ENCODE measurements at regions of chr14 and their contacts with region 1.

Region 1: GRCh38 chr14:51846631-51847488 is 13.6 kb upstream of the GNG2 start:
- DNase-seq: peak; percentile 67
- ATAC-seq: peak; percentile 78
- H3K4me3 Mint-ChIP-seq: peak overlapping the region; percentile 88
- H3K27ac Mint-ChIP-seq: peak overlapping the region; percentile 99
- H3K4me1 Mint-ChIP-seq: peaks cover 86% of the 10 kb centered on the region
- H3K27me3 Mint-ChIP-seq: no peaks in the 10 kb centered on the region
- CTCF ChIP-seq: no peak

Region 2: DNA sequence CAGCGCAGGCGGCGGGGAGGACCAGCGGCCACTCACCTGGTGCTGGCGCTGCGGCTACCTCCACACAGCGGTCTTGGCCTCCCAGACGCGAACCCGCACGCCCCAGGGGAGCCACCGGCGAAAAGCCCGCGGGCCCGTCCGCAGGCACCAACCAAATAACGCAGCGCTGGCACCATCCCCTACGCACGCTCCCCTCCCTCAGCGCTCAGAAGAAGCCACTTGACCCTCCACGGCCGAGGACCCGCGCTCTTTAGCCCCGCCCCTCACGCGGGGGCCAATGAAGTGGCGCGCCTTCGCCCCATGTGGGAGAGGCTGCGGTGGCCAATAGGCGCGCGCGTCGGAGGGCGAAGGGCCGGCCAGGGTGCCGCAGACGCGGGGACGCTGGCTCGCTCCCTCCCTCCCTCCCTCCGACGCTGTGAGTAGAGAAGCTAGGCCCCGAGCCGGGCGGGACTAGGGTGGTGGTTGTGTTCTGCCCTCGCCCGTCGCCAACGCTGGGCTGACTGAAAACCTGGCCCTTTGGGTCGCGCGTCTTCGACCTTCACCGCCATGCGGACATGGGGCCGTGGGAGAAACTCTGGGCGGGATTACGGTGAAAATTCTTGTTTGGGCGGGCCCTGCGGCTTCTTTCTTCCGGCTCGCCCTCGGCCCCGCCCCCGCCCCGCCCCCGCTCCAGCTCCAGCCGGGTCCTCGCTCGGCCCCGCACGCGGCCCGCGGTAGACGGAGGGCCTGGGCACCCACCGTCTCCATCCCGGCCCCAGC is 1534.7 kb before region 1 on chr14 and contains the starts of genes DMAC2L and L2HGDH:
- CTCF ChIA-PET with region 1: no interaction called
- POLR2A ChIA-PET with region 1: no interaction called
- intact Hi-C with region 1: loop called (anchors 10 kb)
- DNase-seq: peak; percentile 91
- ATAC-seq: peak; percentile 94
- H3K4me3 Mint-ChIP-seq: peak within 1 kb of the TSS; percentile 93
- H3K27ac Mint-ChIP-seq: peak within 1 kb of the TSS; percentile 98
- H3K4me1 Mint-ChIP-seq: peaks cover 34% of the 10 kb centered on the region
- H3K27me3 Mint-ChIP-seq: no peaks in the 10 kb centered on the region
- CTCF ChIP-seq: no peak
- total RNA-seq, gene DMAC2L: 31.2 and 32.2 TPM in 2 replicates
- total RNA-seq, gene L2HGDH: 4.3 and 5.2 TPM in 2 replicates

Region 3: GRCh38 chr14:51202914-51203665 is 643.8 kb before region 1 on chr14:
- CTCF ChIA-PET with region 1: no interaction called
- POLR2A ChIA-PET with region 1: interaction called, 4 read pairs
- intact Hi-C with region 1: loop called (anchors 1 kb)
- DNase-seq: peak; percentile 69
- ATAC-seq: peak; percentile 85
- H3K4me3 Mint-ChIP-seq: peak overlapping the region; percentile 54
- H3K27ac Mint-ChIP-seq: peak overlapping the region; percentile 42
- H3K4me1 Mint-ChIP-seq: peaks cover 38% of the 10 kb centered on the region
- H3K27me3 Mint-ChIP-seq: peaks cover 2% of the 10 kb centered on the region
- CTCF ChIP-seq: no peak

Region 4: DNA sequence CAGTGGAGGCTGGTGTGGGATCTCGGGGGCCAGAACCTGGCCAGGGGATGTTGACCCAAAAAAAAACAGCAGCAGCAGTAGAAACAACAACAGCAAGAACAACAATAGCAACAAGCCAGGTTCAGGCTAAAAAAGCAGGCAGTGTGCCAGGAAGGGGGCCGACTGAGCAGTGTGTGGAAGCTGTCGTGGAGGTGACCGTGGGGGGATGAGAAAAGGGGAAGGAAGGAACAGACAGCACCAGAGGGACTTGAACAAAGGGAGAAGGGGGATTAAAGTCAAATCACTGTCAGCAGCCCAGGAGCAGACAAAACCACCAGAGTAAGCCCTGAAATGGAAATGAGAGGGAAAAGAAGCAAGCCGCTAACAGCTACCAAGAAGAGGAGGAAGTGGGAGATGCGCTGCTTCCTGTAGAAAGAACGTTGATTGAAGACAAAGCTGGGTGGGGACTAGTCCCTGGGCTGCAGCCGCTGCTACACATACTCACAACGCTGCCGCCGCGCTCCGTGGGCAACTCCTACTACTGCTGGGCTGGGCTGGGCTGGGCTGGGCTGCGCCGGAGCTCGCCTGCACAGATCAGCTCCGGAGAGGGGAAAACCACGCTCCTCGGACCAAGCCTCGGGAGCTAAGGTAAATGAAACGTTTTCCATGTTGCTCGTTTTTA is 13.4 kb after region 1 on chr14 and contains the start of gene GNG2:
- CTCF ChIA-PET with region 1: interaction called, 4 read pairs
- POLR2A ChIA-PET with region 1: interaction called, 143 read pairs
- intact Hi-C with region 1: loop called (anchors 1 kb)
- DNase-seq: peak; percentile 58
- ATAC-seq: peak; percentile 95
- H3K4me3 Mint-ChIP-seq: peak within 1 kb of the TSS; percentile 95
- H3K27ac Mint-ChIP-seq: peak within 1 kb of the TSS; percentile 88
- H3K4me1 Mint-ChIP-seq: peaks cover 70% of the 10 kb centered on the region
- H3K27me3 Mint-ChIP-seq: no peaks in the 10 kb centered on the region
- CTCF ChIP-seq: no peak
- total RNA-seq, gene GNG2: 68.7 and 70.0 TPM in 2 replicates

Region 5: GRCh38 chr14:51880835-51881580 is 34.1 kb after region 1 on chr14:
- CTCF ChIA-PET with region 1: no interaction called
- POLR2A ChIA-PET with region 1: interaction called, 6 read pairs
- intact Hi-C with region 1: loop called (anchors 1 kb)
- DNase-seq: no peak
- ATAC-seq: peak; percentile 48
- H3K4me3 Mint-ChIP-seq: peak overlapping the region; percentile 19
- H3K27ac Mint-ChIP-seq: peak overlapping the region; percentile 69
- H3K4me1 Mint-ChIP-seq: peaks cover 81% of the 10 kb centered on the region
- H3K27me3 Mint-ChIP-seq: no peaks in the 10 kb centered on the region
- CTCF ChIP-seq: no peak

Region 6: DNA sequence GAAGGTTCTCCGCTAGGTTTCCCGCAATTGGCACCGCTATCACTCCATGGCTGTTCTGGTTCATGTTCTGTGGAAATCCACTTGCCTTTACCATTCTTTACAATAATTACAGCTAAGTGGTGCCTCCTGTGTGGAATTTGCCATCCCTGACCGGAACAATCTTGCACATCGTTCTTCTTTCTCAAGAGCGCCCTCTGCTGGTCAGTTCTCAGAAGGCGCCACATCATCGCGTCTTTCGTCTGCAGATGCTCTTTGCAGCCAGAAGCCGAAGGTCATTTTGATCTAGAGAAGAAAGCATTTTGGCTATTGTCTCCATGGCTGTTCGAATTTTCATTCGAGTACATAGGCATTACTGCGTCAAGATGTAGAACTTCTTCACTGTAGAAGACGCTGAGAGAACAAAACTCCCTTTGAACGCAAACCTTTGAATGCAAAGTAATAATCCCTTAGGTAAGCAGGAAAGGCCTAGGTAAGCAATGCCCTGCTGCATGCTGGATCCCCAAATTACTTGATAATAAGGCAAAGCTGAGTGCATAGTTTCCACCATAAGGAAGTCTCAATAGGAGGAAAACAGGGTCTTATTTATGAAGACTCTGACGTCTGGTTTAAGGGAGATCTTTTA is 132.3 kb after region 1 on chr14:
- CTCF ChIA-PET with region 1: interaction called, 10 read pairs
- POLR2A ChIA-PET with region 1: interaction called, 4 read pairs
- intact Hi-C with region 1: loop called (anchors 1 kb)
- DNase-seq: peak; percentile 68
- ATAC-seq: peak; percentile 75
- H3K4me3 Mint-ChIP-seq: no peak overlapping the region
- H3K27ac Mint-ChIP-seq: no peak overlapping the region
- H3K4me1 Mint-ChIP-seq: peaks cover 6% of the 10 kb centered on the region
- H3K27me3 Mint-ChIP-seq: no peaks in the 10 kb centered on the region
- CTCF ChIP-seq: peak; percentile 37

Region 7: DNA sequence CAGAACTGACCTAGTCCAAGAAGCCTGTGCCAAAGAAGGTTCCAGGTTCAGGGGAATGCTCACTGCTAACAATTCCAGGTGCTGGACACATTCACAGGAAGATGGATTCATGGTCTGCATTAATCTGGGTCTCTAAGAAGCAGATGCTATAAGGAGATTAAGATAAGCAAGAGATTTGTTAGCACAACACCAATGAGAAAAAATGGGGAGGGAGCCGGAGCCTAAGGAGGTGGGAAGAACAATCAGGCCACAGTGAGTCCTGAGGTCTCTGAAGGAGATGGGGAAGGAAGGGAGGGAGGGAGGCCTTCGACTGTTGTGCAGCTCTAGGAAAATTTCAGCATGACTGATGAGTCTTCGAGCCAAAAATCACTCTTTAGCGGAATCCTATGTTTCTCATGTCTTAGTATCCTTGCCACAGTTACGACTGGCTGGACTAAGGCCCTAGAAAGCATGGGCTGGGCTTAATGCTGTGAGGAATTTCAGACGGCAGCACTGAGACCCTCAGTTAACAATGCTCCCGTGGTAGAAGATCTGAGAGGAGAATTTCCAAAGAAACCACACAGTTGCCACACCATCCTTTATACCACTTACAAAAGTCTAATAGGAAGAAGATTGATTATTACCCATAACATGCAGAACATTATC is 389.1 kb after region 1 on chr14:
- CTCF ChIA-PET with region 1: no interaction called
- POLR2A ChIA-PET with region 1: no interaction called
- intact Hi-C with region 1: no loop called
- DNase-seq: no peak
- ATAC-seq: no peak
- H3K4me3 Mint-ChIP-seq: no peak overlapping the region
- H3K27ac Mint-ChIP-seq: no peak overlapping the region
- H3K4me1 Mint-ChIP-seq: peaks cover 22% of the 10 kb centered on the region
- H3K27me3 Mint-ChIP-seq: peaks cover 20% of the 10 kb centered on the region
- CTCF ChIP-seq: no peak

Region 8: GRCh38 chr14:52552063-52552988 is 705.5 kb after region 1 on chr14 and contains the starts of genes GPR137C and TXNDC16:
- CTCF ChIA-PET with region 1: no interaction called
- POLR2A ChIA-PET with region 1: no interaction called
- intact Hi-C with region 1: loop called (anchors 5 kb)
- DNase-seq: peak; percentile 94
- ATAC-seq: peak; percentile 91
- H3K4me3 Mint-ChIP-seq: peak within 1 kb of the TSS; percentile 91
- H3K27ac Mint-ChIP-seq: peak within 1 kb of the TSS; percentile 80
- H3K4me1 Mint-ChIP-seq: peaks cover 17% of the 10 kb centered on the region
- H3K27me3 Mint-ChIP-seq: peaks cover 2% of the 10 kb centered on the region
- CTCF ChIP-seq: no peak
- total RNA-seq, gene GPR137C: 0.05 and 0.16 TPM in 2 replicates
- total RNA-seq, gene TXNDC16: 1.9 and 3.9 TPM in 2 replicates

Measured in activated B cell treated with CpG ODN at 0.5 μM for 24 hours (primary cell).